CD14-positive monocyte (primary cell): ENCODE measurements at regions of chr5 and their contacts with region 1.

Region 1: GRCh38 chr5:179777909-179778308 is 15.9 kb upstream of the LTC4S start:
- DNase-seq: peak; percentile 56 to 86 (median 85)
- H3K4me3 ChIP-seq: peak overlapping the region in 1 of 3 experiments; percentile 46
- H3K4me3 Mint-ChIP-seq: peak overlapping the region; percentile 13 to 61
- H3K27ac ChIP-seq: peak overlapping the region; percentile 30 to 78
- H3K27ac Mint-ChIP-seq: peak overlapping the region; percentile 68 to 95 (median 91)
- H3K4me1 ChIP-seq: peaks cover 69 to 80% of the 10 kb centered on the region in 2 donors
- H3K4me1 Mint-ChIP-seq: peaks cover 73% of the 10 kb centered on the region
- H3K27me3 ChIP-seq: no peaks in the 10 kb centered on the region
- H3K27me3 Mint-ChIP-seq: peaks cover 0 to 2% (median 0%) of the 10 kb centered on the region in 3 donors
- CTCF ChIP-seq: no peak

Region 2: DNA sequence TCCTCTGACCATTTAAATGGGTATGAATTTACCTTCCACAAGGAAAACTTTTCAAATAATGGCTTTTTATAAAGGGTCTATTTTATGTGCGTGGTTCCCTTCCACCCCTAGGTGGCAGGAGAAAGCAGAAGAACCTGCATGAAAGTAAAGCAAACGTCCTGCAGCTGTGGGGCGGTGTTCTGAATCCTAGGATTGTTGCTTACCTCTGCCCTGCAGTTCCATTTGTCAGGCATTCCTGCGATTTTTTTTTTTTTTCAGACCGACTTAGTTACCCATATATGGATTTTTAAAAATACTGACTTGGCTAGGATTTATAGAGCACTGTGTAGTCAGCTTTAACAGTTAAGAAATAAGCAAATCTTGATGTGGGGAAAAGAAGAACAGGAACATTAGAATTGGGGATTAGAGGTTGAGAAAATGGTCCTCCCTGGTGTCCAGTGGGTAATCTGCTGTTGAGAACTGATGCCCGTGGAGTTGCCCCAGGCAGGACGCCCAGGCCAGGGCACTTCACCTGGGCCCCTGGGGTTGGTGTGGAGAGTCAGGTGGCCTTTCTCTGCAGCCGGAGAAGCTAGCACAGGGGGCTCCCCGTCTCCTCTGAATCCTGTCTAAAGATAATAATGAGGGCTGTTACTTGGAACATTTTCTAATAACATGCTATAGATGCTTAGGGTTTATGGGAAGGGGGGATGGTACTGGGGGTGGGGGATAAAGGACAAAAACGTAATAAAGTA is 14.5 kb before region 1 on chr5:
- intact Hi-C with region 1: loop called in 1 of 2 experiments (anchors 2 kb)
- DNase-seq: peak; percentile 49 to 61 (median 50)
- H3K4me3 ChIP-seq: no peak overlapping the region
- H3K4me3 Mint-ChIP-seq: peak overlapping the region in 1 of 2 donors; percentile 26
- H3K27ac ChIP-seq: peak overlapping the region in 1 of 2 donors; percentile 60
- H3K27ac Mint-ChIP-seq: peak overlapping the region in 5 of 7 donors; percentile 14 to 68 (median 46)
- H3K4me1 ChIP-seq: peaks cover 94 to 98% of the 10 kb centered on the region in 2 donors
- H3K4me1 Mint-ChIP-seq: peaks cover 95% of the 10 kb centered on the region
- H3K27me3 ChIP-seq: no peaks in the 10 kb centered on the region
- H3K27me3 Mint-ChIP-seq: peaks cover 0 to 6% (median 0%) of the 10 kb centered on the region in 3 donors
- CTCF ChIP-seq: peak; percentile 92

Region 3: GRCh38 chr5:179936976-179937681 is 159.2 kb after region 1 on chr5:
- intact Hi-C with region 1: no loop called
- DNase-seq: no peak
- H3K4me3 ChIP-seq: no peak overlapping the region
- H3K4me3 Mint-ChIP-seq: no peak overlapping the region
- H3K27ac ChIP-seq: no peak overlapping the region
- H3K27ac Mint-ChIP-seq: no peak overlapping the region
- H3K4me1 ChIP-seq: no peaks in the 10 kb centered on the region
- H3K4me1 Mint-ChIP-seq: no peaks in the 10 kb centered on the region
- H3K27me3 ChIP-seq: no peaks in the 10 kb centered on the region
- H3K27me3 Mint-ChIP-seq: peaks cover 0 to 2% (median 0%) of the 10 kb centered on the region in 3 donors
- CTCF ChIP-seq: no peak